Activated B cell treated with CpG ODN at 0.5 μM for 24 hours (primary cell): ENCODE measurements at regions of chr11 and their contacts with region 1.

Region 1: GRCh38 chr11:133956650-133957633 is at the start of gene IGSF9B:
- DNase-seq: peak; percentile 71
- ATAC-seq: peak; percentile 95
- H3K4me3 Mint-ChIP-seq: peak within 1 kb of the TSS; percentile 83
- H3K27ac Mint-ChIP-seq: peak within 1 kb of the TSS; percentile 30
- H3K4me1 Mint-ChIP-seq: peaks cover 17% of the 10 kb centered on the region
- H3K27me3 Mint-ChIP-seq: peaks cover 46% of the 10 kb centered on the region
- CTCF ChIP-seq: no peak
- total RNA-seq, gene IGSF9B: 0.83 and 2.0 TPM in 2 replicates

Region 2: GRCh38 chr11:133895061-133895479 is 61.9 kb before region 1 on chr11:
- CTCF ChIA-PET with region 1: no interaction called
- POLR2A ChIA-PET with region 1: no interaction called
- intact Hi-C with region 1: loop called (anchors 5 kb)
- DNase-seq: no peak
- ATAC-seq: peak; percentile 80
- H3K4me3 Mint-ChIP-seq: peak overlapping the region; percentile 64
- H3K27ac Mint-ChIP-seq: peak overlapping the region; percentile 76
- H3K4me1 Mint-ChIP-seq: peaks cover 24% of the 10 kb centered on the region
- H3K27me3 Mint-ChIP-seq: peaks cover 8% of the 10 kb centered on the region
- CTCF ChIP-seq: no peak

Region 3: DNA sequence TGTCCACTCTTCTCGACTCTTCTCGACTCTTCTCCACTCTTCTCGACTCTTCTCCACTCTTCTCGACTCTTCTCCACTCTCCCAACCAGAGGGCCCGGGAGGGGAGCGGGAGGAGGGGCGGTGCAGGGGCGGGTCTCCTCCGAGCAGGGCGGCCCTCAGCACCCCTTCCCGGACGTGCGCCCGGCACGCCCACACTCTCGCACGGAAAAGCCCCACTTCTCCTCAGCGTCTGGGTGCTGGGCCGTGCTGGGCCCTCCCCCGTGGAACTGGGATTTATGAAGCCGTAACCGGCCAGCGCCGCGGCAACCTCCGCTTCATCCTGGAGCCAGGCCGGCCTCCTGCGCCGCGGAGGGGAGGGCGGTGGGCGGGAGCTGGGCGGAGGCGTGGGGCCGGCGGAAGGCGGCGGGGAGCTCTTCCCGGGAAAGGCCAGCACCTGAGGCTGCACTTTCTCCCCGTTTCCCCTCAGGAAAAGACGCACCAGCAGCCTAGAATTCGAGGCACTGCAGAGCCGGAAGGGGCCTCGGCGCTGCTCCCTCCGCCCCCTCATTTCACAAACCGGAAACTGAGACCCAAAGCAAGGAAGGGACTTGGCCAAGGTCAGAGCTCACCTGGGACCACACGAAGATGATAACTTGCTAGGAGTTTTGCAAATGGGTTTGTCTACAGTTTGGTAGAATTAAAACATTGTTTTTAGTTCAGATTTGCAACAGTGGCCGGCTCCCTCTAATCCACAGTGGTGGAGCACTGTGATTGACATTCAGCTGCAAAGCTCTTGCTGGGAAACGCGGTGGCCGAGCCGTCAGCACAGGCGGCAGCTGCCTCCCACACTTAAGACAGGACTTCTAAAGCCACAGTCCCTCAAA is 80.3 kb after region 1 on chr11:
- CTCF ChIA-PET with region 1: no interaction called
- POLR2A ChIA-PET with region 1: no interaction called
- intact Hi-C with region 1: loop called (anchors 2 kb)
- DNase-seq: peak; percentile 27
- ATAC-seq: peak; percentile 74
- H3K4me3 Mint-ChIP-seq: peak overlapping the region; percentile 94
- H3K27ac Mint-ChIP-seq: peak overlapping the region; percentile 82
- H3K4me1 Mint-ChIP-seq: peaks cover 18% of the 10 kb centered on the region
- H3K27me3 Mint-ChIP-seq: peaks cover 10% of the 10 kb centered on the region
- CTCF ChIP-seq: no peak

Region 4: DNA sequence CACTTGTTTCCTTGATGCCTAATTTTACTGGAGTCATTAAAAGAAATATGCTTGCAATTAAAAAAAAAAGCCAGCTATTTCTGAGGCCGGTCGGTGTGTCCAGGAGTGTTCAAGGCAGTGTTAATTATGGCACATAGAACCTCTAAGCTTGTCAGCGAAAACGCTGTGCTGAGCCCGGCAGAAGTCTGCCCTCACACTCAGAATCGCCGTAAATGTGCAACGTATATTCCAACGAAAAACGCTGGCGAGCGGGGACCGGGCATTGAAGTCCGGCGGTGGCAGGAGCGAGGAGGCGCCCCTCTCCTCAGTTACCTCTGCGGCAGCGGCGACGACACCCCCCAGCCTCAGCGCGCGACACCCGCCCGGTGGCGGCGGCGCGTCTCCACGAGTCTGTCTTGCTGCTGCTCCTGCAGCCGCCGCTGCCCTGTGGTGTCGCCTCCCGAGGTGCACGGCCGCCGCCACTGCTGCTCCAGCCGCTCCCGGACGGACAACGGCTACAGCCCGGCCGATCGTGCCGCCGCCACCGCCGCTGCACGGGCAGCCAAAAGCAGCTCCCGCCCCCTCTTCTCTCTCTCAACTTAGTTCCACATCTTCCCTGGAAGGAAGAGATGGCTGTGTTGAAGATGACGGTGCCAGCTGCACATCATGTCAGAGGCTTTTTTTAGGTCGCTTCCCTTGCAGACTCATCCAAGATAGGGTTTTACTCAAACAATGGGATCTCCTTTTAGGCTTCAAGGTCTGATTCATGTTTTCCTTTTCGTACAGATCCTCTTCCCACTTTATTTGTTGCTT is 167.9 kb after region 1 on chr11:
- CTCF ChIA-PET with region 1: no interaction called
- POLR2A ChIA-PET with region 1: no interaction called
- intact Hi-C with region 1: no loop called
- DNase-seq: no peak
- ATAC-seq: no peak
- H3K4me3 Mint-ChIP-seq: no peak overlapping the region
- H3K27ac Mint-ChIP-seq: no peak overlapping the region
- H3K4me1 Mint-ChIP-seq: peaks cover 20% of the 10 kb centered on the region
- H3K27me3 Mint-ChIP-seq: peaks cover 17% of the 10 kb centered on the region
- CTCF ChIP-seq: no peak